ENCODE measurements at regions of chr17 and their contacts with region 1.

Region 1: DNA sequence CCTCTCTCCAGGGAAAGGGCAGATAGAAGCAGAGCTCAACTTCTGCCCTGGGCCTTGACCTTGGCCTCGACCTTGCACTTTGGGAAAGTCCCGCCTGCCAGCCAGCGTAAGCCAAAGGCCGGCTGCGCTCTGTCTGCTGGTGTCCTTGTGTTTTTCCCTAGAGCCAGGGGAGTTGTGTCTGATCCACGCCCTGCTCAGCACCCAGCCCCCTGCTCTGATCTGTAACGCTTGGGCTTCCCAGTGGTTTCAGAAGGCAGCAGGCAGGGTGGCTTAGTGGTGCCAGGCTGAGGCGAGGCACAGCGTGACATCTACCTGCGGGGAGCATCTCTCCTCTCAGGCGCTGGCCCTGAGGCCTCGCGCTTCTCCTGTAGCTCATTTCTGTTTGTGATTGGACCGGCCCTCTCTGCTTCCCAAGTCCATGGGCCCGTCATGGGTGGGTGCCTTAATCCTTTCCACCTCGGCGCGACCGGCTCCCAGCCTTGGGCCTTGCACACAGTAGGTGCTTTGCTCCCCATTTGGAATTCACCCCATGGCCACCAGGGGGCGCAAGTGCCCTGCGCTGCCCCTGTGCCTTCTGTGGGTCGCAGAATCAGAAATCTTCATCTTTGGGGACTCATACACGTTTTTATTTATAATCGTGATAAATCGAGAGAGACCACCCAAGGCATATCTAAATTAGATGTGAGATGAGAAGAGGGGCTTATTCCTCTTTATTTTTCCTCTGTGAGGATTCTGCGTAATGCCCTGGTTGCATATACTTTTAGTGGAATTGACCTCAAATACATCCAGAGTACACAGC is 24.2 kb downstream of the SGSH start:
- DNase-seq: no peak
- H3K4me3 ChIP-seq: no peak overlapping the region
- H3K27me3 ChIP-seq: peaks cover 4% of the 10 kb centered on the region
- CTCF ChIP-seq: peak; percentile 92

Region 2: DNA sequence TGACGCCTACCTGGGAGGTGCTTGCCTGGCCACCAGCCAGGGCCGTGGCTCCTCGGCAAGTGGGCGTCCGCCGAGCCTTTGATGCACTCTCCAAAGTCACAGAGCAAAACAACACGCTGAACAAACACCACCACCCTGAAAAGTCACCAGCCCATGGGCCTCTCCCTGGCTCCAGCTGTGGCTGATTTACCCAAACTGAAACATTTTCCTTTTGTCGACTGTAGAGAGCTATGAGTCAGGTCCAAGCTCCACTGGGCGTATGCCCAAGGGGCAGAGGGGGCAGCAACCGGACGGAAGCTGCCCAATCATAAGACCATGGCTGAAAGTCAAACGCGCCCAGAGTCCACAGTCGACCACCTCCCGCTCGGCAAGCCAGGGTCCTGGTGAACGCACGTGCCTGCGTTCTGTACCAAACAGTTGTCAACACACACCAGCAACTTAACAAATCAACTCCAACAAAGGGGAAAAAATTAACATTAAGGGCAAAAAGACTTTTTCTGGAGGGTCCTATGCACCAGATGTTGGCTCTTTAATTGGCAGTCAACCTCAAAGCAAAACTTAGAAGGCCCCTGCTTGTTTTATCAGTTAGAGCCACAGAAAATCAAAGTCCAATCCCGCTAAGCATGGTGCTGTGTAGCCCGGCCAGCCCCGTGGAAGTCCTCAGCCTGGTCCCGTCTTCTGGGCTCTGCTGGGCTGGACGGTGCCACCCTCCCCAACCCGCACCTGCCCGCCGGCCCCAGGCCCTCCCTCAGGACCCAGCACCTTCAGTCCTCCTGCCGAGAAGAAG is 207.6 kb before region 1 on chr17:
- CTCF ChIA-PET with region 1: no interaction called
- POLR2A ChIA-PET with region 1: no interaction called
- DNase-seq: no peak
- H3K4me3 ChIP-seq: peak overlapping the region; percentile 29; the same call in 1 of the 2 replicates
- H3K27me3 ChIP-seq: no peaks in the 10 kb centered on the region
- CTCF ChIP-seq: no peak

Region 3: GRCh38 chr17:80117491-80118401 is 78.2 kb before region 1 on chr17:
- CTCF ChIA-PET with region 1: no interaction called
- POLR2A ChIA-PET with region 1: no interaction called
- DNase-seq: no peak
- H3K4me3 ChIP-seq: no peak overlapping the region
- H3K27me3 ChIP-seq: no peaks in the 10 kb centered on the region
- CTCF ChIP-seq: no peak

Region 4: DNA sequence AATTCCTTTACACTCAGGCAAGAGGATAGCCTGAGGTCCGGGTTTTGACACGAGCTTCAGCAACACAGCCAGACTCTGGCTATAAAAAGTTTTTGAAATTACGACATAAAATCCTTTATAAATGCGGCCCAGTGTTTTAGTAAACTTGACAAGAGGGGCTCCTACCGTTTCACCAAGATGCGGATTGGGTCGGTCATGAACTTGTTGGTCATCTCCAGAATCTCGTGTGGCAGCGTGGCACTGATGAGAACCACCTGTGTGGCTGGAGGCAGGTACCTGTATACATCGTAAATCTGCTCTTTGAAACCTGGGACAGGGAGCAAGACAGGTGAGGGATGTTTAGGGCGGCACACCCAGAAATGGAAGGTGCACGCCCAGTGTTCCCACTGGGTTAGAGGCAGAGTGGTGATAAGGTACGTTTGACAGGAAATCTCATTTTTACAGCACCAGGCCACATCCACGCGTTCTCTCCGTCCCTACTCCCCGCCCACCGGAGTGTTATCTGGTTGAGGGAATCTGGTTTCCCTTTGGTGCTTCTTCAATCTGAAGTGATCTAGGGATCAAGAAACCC is 57.0 kb before region 1 on chr17:
- CTCF ChIA-PET with region 1: no interaction called
- POLR2A ChIA-PET with region 1: no interaction called
- DNase-seq: no peak
- H3K4me3 ChIP-seq: no peak overlapping the region
- H3K27me3 ChIP-seq: no peaks in the 10 kb centered on the region
- CTCF ChIP-seq: no peak

Region 5: GRCh38 chr17:80169784-80170500 is 26.0 kb before region 1 on chr17 and contains the start of gene CARD14:
- CTCF ChIA-PET with region 1: interaction called, 12 read pairs
- POLR2A ChIA-PET with region 1: no interaction called
- DNase-seq: no peak
- H3K4me3 ChIP-seq: no peak within 1 kb of the TSS
- H3K27me3 ChIP-seq: peaks cover 4% of the 10 kb centered on the region
- CTCF ChIP-seq: no peak
- polyA plus RNA-seq, gene CARD14: not detected in 2 replicates

Region 6: GRCh38 chr17:80177986-80178590 is 17.8 kb before region 1 on chr17:
- CTCF ChIA-PET with region 1: interaction called, 44 read pairs
- POLR2A ChIA-PET with region 1: no interaction called
- DNase-seq: no peak
- H3K4me3 ChIP-seq: no peak overlapping the region
- H3K27me3 ChIP-seq: peaks cover 6% of the 10 kb centered on the region
- CTCF ChIP-seq: no peak

Region 7: GRCh38 chr17:80212109-80212508 is 16.2 kb after region 1 on chr17:
- CTCF ChIA-PET with region 1: interaction called, 11 read pairs
- POLR2A ChIA-PET with region 1: no interaction called
- DNase-seq: no peak
- H3K4me3 ChIP-seq: no peak overlapping the region
- H3K27me3 ChIP-seq: no peaks in the 10 kb centered on the region
- CTCF ChIP-seq: no peak

Region 8: GRCh38 chr17:80219763-80220725 is 24.1 kb after region 1 on chr17 and contains the starts of genes SGSH and SLC26A11:
- CTCF ChIA-PET with region 1: interaction called, 9 read pairs
- POLR2A ChIA-PET with region 1: interaction called, 12 read pairs
- DNase-seq: no peak
- H3K4me3 ChIP-seq: peak within 1 kb of the TSS; percentile 87
- H3K27me3 ChIP-seq: no peaks in the 10 kb centered on the region
- CTCF ChIP-seq: no peak
- polyA plus RNA-seq, gene SGSH: 26.3 and 44.4 TPM in 2 replicates
- polyA plus RNA-seq, gene SLC26A11: 10.6 and 17.1 TPM in 2 replicates

Measured in BJ (cell line).